Activated T-helper 1 cell treated with anti-CD3 and anti-CD28 coated beads, Interleukin-12 subunit alpha, Interleukin-12 subunit beta, Interleukin-2, Interleukin-4 antibody, amounts not matched to agents 30 ng/mL and 10 ng/mL and 1 ng/mL, durations not matched to agents 14 hours and 24 hours and 36 hours (primary cell): ENCODE measurements at regions of chrX and their contacts with region 1.

Region 1: GRCh38 chrX:15143050-15143824 is 126.6 kb downstream of the ASB9 start:
- DNase-seq: peak; percentile 11
- H3K4me3 Mint-ChIP-seq: peak overlapping the region; percentile 37
- H3K27ac Mint-ChIP-seq: peak overlapping the region; percentile 26
- H3K4me1 Mint-ChIP-seq: peaks cover 21% of the 10 kb centered on the region
- H3K27me3 Mint-ChIP-seq: no peaks in the 10 kb centered on the region

Region 2: GRCh38 chrX:14039344-14039743 is 1103.9 kb before region 1 on chrX:
- intact Hi-C with region 1: loop called (anchors 1 kb)
- DNase-seq: peak; percentile 31
- H3K4me3 Mint-ChIP-seq: no peak overlapping the region
- H3K27ac Mint-ChIP-seq: no peak overlapping the region
- H3K4me1 Mint-ChIP-seq: no peaks in the 10 kb centered on the region
- H3K27me3 Mint-ChIP-seq: peaks cover 13% of the 10 kb centered on the region

Region 3: GRCh38 chrX:14095702-14096101 is 1047.5 kb before region 1 on chrX:
- intact Hi-C with region 1: loop called (anchors 5 kb)
- DNase-seq: peak; percentile 6
- H3K4me3 Mint-ChIP-seq: no peak overlapping the region
- H3K27ac Mint-ChIP-seq: no peak overlapping the region
- H3K4me1 Mint-ChIP-seq: no peaks in the 10 kb centered on the region
- H3K27me3 Mint-ChIP-seq: peaks cover 4% of the 10 kb centered on the region

Region 4: DNA sequence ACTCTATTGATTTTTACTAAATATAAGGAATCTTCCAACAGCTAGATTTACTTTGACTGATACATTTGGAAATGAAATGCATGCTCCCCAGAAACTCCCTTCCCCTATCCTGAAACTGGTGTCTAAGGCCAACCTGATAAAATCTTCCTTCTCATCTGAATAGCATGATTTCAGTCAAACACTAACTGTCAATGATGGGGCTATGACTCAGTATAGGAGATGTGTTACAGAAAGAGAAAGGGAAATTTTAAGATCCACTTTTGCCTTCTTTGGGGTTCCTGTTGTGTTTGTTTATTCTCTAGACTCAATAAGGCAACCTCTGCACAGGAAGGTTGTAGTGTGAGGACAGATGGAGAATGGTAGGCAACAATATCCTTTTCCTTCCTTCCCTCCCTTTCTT is 109.3 kb before region 1 on chrX:
- intact Hi-C with region 1: loop called (anchors 5 kb)
- DNase-seq: no peak
- H3K4me3 Mint-ChIP-seq: no peak overlapping the region
- H3K27ac Mint-ChIP-seq: peak overlapping the region; percentile 36
- H3K4me1 Mint-ChIP-seq: peaks cover 14% of the 10 kb centered on the region
- H3K27me3 Mint-ChIP-seq: no peaks in the 10 kb centered on the region

Region 5: DNA sequence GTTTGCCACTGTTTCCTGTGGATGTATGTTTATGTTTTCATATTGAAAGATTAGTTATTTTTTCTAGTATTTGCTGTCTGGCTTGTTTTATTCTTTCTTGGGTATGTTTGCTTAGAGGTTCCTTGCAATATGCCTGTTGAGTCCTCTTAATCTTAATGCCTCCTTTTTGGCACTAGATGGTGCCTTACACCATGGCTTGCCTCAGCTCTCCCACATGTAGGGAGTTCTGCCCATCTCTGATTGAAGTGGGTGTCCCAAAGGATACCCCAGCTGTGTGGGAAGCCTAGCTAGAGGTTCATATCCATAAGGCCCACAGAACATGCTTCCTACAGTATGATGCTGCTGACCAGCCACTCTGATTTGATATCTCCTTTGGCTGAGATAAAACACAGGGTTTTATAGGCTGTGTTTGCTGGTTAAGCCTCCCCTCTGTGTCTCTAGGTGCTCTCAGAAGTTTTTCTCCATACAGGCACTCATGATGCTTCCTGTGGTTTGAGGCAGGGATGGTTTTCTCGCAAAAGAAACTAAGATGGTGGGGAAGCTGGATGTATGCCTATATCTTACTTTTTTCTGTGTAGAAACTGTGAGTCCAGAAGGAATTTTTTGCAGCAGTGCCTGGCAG is 35.8 kb before region 1 on chrX:
- intact Hi-C with region 1: loop called (anchors 1 kb)
- DNase-seq: no peak
- H3K4me3 Mint-ChIP-seq: no peak overlapping the region
- H3K27ac Mint-ChIP-seq: no peak overlapping the region
- H3K4me1 Mint-ChIP-seq: peaks cover 15% of the 10 kb centered on the region
- H3K27me3 Mint-ChIP-seq: peaks cover 5% of the 10 kb centered on the region

Region 6: GRCh38 chrX:15158736-15159406 is 15.6 kb after region 1 on chrX:
- intact Hi-C with region 1: loop called (anchors 1 kb)
- DNase-seq: peak; percentile 14
- H3K4me3 Mint-ChIP-seq: peak overlapping the region; percentile 86
- H3K27ac Mint-ChIP-seq: peak overlapping the region; percentile 88
- H3K4me1 Mint-ChIP-seq: peaks cover 24% of the 10 kb centered on the region
- H3K27me3 Mint-ChIP-seq: no peaks in the 10 kb centered on the region

Region 7: GRCh38 chrX:15242899-15243555 is 99.8 kb after region 1 on chrX:
- intact Hi-C with region 1: loop called (anchors 1 kb)
- DNase-seq: no peak
- H3K4me3 Mint-ChIP-seq: no peak overlapping the region
- H3K27ac Mint-ChIP-seq: no peak overlapping the region
- H3K4me1 Mint-ChIP-seq: no peaks in the 10 kb centered on the region
- H3K27me3 Mint-ChIP-seq: no peaks in the 10 kb centered on the region